ENCODE measurements at regions of chr1 and their contacts with region 1.

Region 1: DNA sequence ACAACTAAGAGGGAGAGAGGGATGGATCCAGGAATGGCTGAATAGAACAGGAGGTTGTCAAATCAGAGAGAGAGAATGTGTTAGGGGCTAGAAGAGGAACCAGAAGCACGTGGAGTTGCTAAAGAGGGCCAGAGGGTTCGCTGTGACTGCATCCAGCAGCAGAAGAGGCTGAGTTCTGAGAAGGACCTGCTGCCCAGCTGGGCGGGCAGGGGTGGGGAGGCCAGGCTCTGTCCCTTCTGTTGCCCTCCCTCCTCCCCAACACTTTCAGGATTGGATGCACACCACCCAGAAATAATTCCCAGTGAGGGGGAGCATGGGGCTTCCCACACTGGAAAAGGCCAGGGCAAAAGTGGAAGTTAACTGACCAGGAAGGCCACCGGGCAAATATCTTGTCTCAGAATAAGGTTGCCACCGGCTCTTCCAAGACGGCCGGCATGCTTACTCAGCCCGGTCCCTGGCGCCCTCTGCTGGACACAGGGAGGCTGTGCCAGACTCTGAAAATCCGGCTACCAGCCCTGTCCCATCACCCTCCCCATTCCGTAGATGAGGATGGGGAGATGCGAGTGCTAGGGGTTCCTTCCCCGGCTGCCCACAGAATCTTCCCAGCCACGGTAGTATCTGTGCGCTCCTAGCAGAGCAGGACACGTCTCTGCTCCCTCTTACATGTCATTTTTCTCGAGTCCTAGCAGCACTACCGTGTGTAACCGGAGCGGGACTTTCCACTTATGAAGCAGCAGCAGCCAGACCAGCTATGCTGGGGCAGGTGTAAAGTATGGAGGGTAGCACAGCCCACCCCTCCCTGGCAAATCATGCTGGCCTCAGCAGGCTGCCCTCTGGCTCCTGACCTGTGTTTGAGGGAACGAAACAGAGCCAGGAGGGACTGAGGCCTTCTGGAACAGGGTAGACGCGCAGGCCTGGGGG is 46.8 kb upstream of the A3GALT2 start:
- DNase-seq: peak; percentile 81 to 99 (median 93)

Region 2: GRCh38 chr1:33195556-33195955 is 172.2 kb before region 1 on chr1:
- intact Hi-C with region 1: no loop called
- DNase-seq: no peak

Region 3: DNA sequence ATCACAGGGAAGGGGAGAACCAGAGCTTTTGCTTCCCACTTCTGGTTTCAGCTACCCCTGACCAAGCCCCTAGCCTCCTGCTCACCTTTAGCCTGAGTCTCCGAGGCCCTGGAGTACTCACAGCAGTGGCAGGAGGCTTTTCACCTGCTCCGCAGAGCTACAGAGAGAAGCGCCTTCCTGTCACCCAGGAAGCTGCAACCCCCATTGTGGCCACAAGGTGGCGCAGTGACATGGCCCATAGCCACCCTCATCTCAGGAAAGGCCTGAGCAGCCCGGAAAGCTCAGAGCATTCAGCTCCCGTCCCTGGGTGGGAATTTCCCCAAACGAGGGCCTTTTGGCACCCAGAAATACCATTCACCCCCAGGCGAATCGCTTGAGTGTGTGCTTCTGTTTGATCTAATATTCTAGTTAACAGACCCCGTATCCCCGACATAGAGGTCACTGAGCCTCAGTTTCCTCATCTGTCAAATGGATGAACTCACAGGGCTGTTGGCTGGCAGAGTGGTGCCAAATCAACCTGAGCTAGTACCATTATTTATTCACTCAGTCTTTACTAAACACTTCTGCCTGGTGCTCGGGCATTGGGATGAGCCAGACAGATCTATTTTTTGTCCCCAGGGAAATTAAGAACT is 72.2 kb before region 1 on chr1:
- intact Hi-C with region 1: loop called (anchors 1 kb)
- DNase-seq: peak; percentile 84 to 98 (median 94)

Region 4: GRCh38 chr1:33349778-33350610 is 17.8 kb before region 1 on chr1:
- intact Hi-C with region 1: loop called (anchors 2 kb)
- DNase-seq: peak; percentile 66 to 98 (median 78)

Region 5: GRCh38 chr1:33430692-33431593 is 63.2 kb after region 1 on chr1 and contains the start of gene PHC2:
- intact Hi-C with region 1: loop called (anchors 5 kb)
- DNase-seq: peak; percentile 98 to 100 (median 100)

Region 6: GRCh38 chr1:33460947-33461629 is 93.3 kb after region 1 on chr1:
- intact Hi-C with region 1: loop called (anchors 5 kb)
- DNase-seq: peak in 3 of 10 donors; percentile 34 to 84 (median 34)

Region 7: DNA sequence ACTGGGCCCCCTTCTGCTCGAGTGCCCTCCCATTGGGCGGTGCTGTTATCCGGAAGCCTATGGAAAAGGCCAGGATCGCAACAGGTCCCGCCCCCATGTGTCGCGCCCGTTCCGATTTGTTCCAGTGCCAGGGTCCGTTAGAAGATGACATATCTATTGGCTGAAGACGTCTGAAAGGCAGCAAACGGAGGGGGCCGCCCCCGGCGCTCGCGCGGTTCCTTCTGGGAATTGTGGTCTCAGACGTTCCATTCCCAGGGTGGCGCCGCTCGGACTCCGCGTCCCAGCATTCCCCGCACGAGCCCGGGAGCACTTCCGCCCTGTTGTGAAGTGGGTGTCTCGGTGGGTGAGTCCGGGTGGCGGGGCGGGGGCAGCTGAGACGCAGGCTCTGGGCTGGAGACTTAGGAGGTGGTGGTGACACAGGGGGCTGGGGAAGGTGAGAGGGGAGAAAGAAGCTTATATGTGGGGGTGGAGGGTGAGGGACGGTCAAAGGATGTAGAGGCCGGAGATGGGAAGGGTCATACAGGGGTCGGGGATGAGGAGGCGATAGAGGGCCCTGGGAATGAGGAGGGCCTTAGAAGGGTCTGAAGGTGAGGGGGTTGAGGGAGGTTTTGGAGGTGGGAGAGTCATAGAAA is 104.7 kb after region 1 on chr1 and contains the start of gene ZSCAN20:
- intact Hi-C with region 1: loop called (anchors 5 kb)
- DNase-seq: peak; percentile 98 to 100 (median 99)